Activated CD8-positive, alpha-beta T cell treated with anti-CD3 and anti-CD28 coated beads for 36 hours (primary cell): ENCODE measurements at regions of chr4 and their contacts with region 1.

Region 1: DNA sequence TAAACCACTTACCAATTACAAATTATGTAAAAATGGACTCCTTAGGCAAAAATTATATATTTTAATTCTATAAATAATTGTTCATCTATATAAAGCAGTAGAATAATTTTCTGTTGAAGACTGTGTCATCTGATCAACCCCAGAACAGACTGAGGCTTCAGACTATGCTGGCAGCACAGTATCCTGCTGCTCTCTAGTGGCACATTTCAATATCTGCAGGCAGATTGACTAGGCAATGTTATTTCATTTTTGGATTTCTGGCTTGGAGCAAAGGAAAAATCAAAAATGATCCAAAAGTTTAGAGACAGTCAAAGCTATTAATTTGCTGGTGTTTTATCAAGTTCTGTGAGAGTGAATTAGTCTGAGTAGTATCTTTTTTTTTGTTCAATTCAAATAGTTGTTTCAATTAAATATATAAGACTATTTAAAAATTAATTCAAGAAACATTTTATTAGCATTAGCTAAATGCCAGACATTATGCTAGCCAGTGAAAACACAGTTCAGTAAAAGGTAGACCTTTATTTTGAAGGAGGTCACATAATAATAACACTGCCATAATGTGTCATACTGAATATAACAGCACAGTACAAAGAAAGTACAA is 21.3 kb upstream of the SULT1E1 start:
- DNase-seq: peak; percentile 31
- ATAC-seq: peak; percentile 64
- H3K4me3 Mint-ChIP-seq: no peak overlapping the region
- H3K27ac Mint-ChIP-seq: no peak overlapping the region
- H3K4me1 Mint-ChIP-seq: no peaks in the 10 kb centered on the region
- H3K27me3 Mint-ChIP-seq: no peaks in the 10 kb centered on the region
- CTCF ChIP-seq: peak; percentile 76

Region 2: GRCh38 chr4:69823481-69824186 is 57.6 kb before region 1 on chr4:
- CTCF ChIA-PET with region 1: interaction called, 20 read pairs
- POLR2A ChIA-PET with region 1: no interaction called
- intact Hi-C with region 1: no loop called
- DNase-seq: peak; percentile 70
- ATAC-seq: peak; percentile 88
- H3K4me3 Mint-ChIP-seq: no peak overlapping the region
- H3K27ac Mint-ChIP-seq: no peak overlapping the region
- H3K4me1 Mint-ChIP-seq: peaks cover 6% of the 10 kb centered on the region
- H3K27me3 Mint-ChIP-seq: no peaks in the 10 kb centered on the region
- CTCF ChIP-seq: peak; percentile 66